ENCODE measurements at regions of chr18 and their contacts with region 1.

Region 1: DNA sequence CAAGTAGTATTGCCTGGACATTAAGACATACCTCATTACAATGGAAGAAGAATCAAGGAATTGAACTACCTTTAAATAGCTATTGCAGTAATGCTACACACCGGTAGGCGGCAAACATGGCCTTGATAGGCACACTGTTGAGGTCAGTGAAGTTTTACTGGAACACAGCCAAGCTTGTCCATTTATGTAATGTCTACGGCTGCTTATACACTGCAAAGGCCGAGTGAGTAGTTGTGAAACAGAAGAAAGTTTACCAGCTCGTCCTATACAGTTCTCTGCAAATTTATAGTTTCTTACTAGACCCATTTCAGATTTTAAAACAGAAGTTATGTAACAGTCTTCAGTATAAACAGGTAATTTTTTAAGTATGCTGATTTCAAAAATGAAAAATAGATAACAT is 38.8 kb downstream of the PPP4R1 start:
- H3K4me3 ChIP-seq: no peak overlapping the region
- H3K27ac ChIP-seq: no peak overlapping the region
- H3K4me1 ChIP-seq: no peaks in the 10 kb centered on the region; the same call in 1 of the 2 replicates
- CTCF ChIP-seq: peak; percentile 64

Region 2: DNA sequence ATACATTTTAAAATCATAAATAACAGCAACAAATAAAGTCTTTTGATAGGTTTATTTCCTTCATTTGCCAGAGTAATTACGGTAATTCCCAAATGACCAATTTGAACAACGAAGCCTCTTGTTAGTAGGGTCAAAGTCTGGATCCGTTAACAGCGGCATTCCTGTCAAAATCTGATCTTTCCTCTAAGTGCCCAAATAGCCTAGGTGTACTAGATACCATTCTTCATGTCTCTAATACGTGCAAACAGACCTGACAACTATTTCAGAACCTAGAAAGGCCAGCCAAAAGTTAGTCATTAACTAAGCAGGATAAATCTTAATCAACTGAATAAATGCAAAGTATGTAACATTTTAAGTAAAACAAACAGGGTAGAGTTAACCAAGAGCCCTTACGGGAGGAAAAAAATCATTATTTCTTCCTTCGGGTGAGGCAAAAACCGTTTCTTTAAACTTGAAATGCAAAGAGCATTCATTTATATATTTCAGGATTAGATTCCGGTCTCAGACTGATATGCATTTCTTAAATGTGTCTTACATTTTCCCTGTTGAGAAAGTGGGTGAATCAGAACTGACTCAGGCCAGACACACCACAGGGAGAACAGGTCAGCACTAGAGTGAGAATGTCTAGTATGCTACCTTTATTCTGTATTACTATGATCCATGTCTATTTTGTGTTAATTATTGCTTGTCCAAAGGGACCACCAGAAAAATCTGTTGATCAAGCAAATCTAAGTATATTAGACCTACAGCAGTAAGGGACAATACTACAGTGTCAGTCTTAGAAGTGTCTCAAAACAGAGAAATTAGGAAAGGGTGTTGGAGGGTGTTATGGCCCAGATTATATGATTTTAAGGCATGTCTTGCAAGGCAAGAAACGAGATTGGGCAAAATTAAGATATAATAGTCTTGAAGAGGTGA is 614.6 kb before region 1 on chr18:
- CTCF ChIA-PET with region 1: no interaction called
- POLR2A ChIA-PET with region 1: no interaction called
- H3K4me3 ChIP-seq: no peak overlapping the region
- H3K27ac ChIP-seq: no peak overlapping the region
- H3K4me1 ChIP-seq: no peaks in the 10 kb centered on the region
- CTCF ChIP-seq: no peak

Region 3: GRCh38 chr18:9594823-9595596 is 19.5 kb after region 1 on chr18:
- CTCF ChIA-PET with region 1: interaction called, 16 read pairs
- POLR2A ChIA-PET with region 1: no interaction called
- H3K4me3 ChIP-seq: no peak overlapping the region
- H3K27ac ChIP-seq: no peak overlapping the region
- H3K4me1 ChIP-seq: no peaks in the 10 kb centered on the region
- CTCF ChIP-seq: no peak

Region 4: DNA sequence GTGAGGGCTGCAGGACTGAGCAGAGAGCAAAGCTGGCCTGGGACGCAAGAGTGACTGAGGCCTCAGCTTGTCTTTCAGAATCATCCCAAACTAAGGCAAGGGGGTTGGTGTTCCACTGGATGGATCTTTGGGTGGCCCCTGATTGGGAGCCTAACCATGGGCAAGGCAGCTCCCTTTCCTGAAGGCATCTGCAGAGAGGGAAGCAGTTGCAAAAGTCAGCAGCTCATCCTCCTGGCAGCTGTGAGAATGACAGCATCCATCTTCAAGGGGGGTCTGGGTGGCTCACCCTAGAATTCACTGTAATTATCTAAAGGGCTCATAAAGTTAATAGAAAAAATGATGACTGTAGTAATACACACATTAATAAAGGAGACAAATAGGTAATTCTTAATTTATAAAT is 86.0 kb after region 1 on chr18:
- CTCF ChIA-PET with region 1: interaction called, 10 read pairs
- POLR2A ChIA-PET with region 1: no interaction called
- H3K4me3 ChIP-seq: no peak overlapping the region
- H3K27ac ChIP-seq: no peak overlapping the region
- H3K4me1 ChIP-seq: no peaks in the 10 kb centered on the region
- CTCF ChIP-seq: no peak

Region 5: GRCh38 chr18:9683407-9684396 is 108.1 kb after region 1 on chr18:
- CTCF ChIA-PET with region 1: interaction called, 10 read pairs
- POLR2A ChIA-PET with region 1: no interaction called
- H3K4me3 ChIP-seq: no peak overlapping the region
- H3K27ac ChIP-seq: no peak overlapping the region
- H3K4me1 ChIP-seq: no peaks in the 10 kb centered on the region; the same call in 1 of the 2 replicates
- CTCF ChIP-seq: peak; percentile 61